ENCODE measurements at regions of chr3 and their contacts with region 1.

Region 1: GRCh38 chr3:139343895-139344856 is at the start of gene MRPS22:
- DNase-seq: peak; percentile 95
- H3K4me3 Mint-ChIP-seq: peak within 1 kb of the TSS; percentile 20
- H3K27ac Mint-ChIP-seq: no peak within 1 kb of the TSS
- H3K4me1 Mint-ChIP-seq: peaks cover 13% of the 10 kb centered on the region
- H3K27me3 Mint-ChIP-seq: no peaks in the 10 kb centered on the region
- total RNA-seq, gene MRPS22: 55.8 and 59.7 TPM in 2 replicates

Region 2: GRCh38 chr3:138960417-138960852 is 383.7 kb before region 1 on chr3:
- intact Hi-C with region 1: no loop called
- DNase-seq: no peak
- H3K4me3 Mint-ChIP-seq: peak overlapping the region; percentile 42
- H3K27ac Mint-ChIP-seq: no peak overlapping the region
- H3K4me1 Mint-ChIP-seq: peaks cover 9% of the 10 kb centered on the region
- H3K27me3 Mint-ChIP-seq: peaks cover 46% of the 10 kb centered on the region

Region 3: DNA sequence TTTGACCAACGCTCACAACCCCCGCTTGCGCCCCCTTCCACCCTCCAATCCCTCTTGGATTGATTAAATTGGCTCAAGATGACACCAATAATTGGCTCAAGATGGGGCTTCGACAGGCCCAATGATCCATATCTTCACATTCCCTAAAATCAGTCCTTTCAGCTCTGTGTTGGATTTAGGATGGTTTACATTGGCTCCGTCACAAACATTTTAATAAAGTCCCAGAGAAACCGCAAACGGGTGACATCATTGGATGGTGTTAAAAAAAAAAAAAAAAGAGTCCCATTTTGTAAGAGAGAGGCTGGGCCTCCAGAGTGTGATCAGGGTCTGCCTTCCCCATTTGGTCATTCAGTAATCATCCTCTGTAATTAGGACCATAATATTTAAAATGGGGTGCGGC is 113.8 kb before region 1 on chr3:
- intact Hi-C with region 1: no loop called
- DNase-seq: no peak
- H3K4me3 Mint-ChIP-seq: no peak overlapping the region
- H3K27ac Mint-ChIP-seq: no peak overlapping the region
- H3K4me1 Mint-ChIP-seq: no peaks in the 10 kb centered on the region
- H3K27me3 Mint-ChIP-seq: no peaks in the 10 kb centered on the region

Region 4: GRCh38 chr3:139319428-139320402 is 24.5 kb before region 1 on chr3:
- intact Hi-C with region 1: no loop called
- DNase-seq: no peak
- H3K4me3 Mint-ChIP-seq: no peak overlapping the region
- H3K27ac Mint-ChIP-seq: no peak overlapping the region
- H3K4me1 Mint-ChIP-seq: no peaks in the 10 kb centered on the region
- H3K27me3 Mint-ChIP-seq: peaks cover 10% of the 10 kb centered on the region

Region 5: GRCh38 chr3:139434764-139435307 is 90.7 kb after region 1 on chr3:
- intact Hi-C with region 1: no loop called
- DNase-seq: no peak
- H3K4me3 Mint-ChIP-seq: no peak overlapping the region
- H3K27ac Mint-ChIP-seq: no peak overlapping the region
- H3K4me1 Mint-ChIP-seq: no peaks in the 10 kb centered on the region
- H3K27me3 Mint-ChIP-seq: peaks cover 2% of the 10 kb centered on the region

Region 6: DNA sequence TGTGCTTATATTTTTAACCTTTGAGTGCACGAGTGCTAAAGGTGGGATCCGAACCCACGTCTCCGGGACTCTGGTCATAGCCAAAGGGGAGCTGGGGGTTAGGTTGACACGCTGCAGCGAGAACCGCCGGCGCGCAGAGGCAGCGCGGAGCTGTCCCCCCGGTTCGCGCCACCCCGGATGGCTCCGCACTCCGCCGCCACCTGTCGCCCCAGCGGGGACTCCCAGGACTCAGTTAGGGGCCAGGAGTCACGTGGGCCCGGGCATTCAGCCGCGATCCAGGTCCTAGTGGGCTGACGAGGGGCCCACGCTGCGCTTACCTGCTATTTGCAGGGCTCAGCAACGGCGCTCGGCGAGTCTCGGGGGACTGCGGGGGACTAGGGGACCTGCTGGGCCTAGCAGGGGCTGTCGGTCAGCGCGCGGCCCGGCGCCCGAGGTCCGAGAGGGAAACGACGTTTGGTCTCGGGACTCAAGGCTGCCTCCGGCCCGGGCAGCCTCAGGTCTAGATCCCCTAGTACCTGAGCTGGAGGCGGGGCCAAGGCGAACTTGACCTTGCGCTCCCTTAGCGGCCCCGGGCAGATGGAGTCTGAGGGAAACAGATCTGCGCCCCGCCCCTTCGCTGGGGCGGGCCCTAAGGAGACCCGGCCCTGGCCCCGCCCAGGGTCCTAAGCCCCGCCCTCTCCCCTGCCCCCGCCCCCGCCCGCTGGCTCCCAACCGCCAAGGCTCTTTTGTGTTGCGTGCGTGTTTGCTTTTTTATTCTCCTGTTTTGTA is 333.4 kb after region 1 on chr3 and contains the start of gene NMNAT3:
- intact Hi-C with region 1: loop called (anchors 5 kb)
- DNase-seq: peak; percentile 94
- H3K4me3 Mint-ChIP-seq: peak within 1 kb of the TSS; percentile 79
- H3K27ac Mint-ChIP-seq: no peak within 1 kb of the TSS
- H3K4me1 Mint-ChIP-seq: peaks cover 5% of the 10 kb centered on the region
- H3K27me3 Mint-ChIP-seq: peaks cover 8% of the 10 kb centered on the region
- total RNA-seq, gene NMNAT3: 0.73 and 1.0 TPM in 2 replicates